Prostate gland (tissue), 2 donors: ENCODE measurements at regions of chr14 and their contacts with region 1.

Region 1: GRCh38 chr14:37874429-37875191 is 279.2 kb downstream of the TTC6 start:
- DNase-seq: peak; percentile 78
- H3K4me3 ChIP-seq: no peak overlapping the region
- H3K27ac ChIP-seq: no peak overlapping the region
- H3K4me1 ChIP-seq: peaks cover 6% of the 10 kb centered on the region
- H3K27me3 ChIP-seq: no peaks in the 10 kb centered on the region
- CTCF ChIP-seq: peak; percentile 73 to 89 (median 86)
- POLR2A ChIP-seq: no peak

Region 2: GRCh38 chr14:37246427-37246914 is 628.1 kb before region 1 on chr14:
- intact Hi-C with region 1: loop called (anchors 5 kb)
- DNase-seq: peak; percentile 24
- H3K4me3 ChIP-seq: no peak overlapping the region
- H3K27ac ChIP-seq: peak overlapping the region; percentile 84 to 85
- H3K4me1 ChIP-seq: no peaks in the 10 kb centered on the region
- H3K27me3 ChIP-seq: no peaks in the 10 kb centered on the region
- CTCF ChIP-seq: peak; percentile 71 to 95 (median 85)
- POLR2A ChIP-seq: no peak

Region 3: GRCh38 chr14:37709419-37710195 is 165.0 kb before region 1 on chr14:
- intact Hi-C with region 1: loop called (anchors 10 kb)
- DNase-seq: no peak
- H3K4me3 ChIP-seq: no peak overlapping the region
- H3K27ac ChIP-seq: no peak overlapping the region
- H3K4me1 ChIP-seq: peaks cover 2% of the 10 kb centered on the region
- H3K27me3 ChIP-seq: no peaks in the 10 kb centered on the region
- CTCF ChIP-seq: peak in 2 of 4 experiments; percentile 34 to 56
- POLR2A ChIP-seq: no peak